Vagina (tissue), 2 donors: ENCODE measurements at regions of chr6 and their contacts with region 1.

Region 1: DNA sequence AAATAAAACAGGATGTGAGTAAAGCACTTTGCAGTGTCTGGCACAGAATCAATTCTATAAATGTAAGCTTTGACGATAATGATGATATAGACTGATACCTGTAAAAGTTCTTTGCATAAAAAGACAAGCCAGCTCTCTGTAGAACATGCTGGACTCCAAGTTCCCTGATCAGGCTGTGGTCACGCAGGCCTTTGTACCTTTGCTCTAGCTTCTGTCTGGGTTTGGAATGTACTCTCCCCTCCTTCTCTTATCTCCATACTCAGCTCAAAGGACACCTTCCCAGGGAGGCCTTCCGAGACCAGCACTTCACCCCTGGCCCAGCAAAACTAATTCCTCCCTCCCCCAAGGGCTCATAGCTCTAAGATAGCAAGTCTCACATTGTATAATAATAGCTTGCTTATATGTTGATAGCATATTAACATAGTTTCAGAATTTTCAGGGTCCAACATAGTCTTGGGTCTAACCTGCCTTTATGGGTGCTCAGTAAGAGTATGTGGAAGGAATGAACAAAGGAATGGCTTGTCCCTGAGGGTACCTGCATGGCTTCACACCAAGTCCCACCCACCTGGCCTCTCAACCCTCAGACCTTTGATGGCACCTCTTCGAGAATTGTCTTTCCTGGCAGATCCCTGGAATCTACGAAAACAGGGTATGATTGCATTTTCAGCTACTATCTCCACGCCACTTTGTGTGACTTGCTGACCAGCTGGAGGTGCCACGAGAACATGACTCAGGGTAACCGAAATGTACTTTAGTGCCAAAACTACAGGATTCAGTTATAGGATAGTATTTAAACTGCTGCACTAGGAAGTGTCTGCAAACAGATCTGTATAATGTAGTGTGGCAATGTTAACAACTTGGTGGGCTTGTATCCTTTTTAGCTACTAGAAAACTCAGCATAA is 41.7 kb upstream of the PIM1 start:
- DNase-seq: no peak
- H3K4me3 ChIP-seq: no peak overlapping the region
- H3K27ac ChIP-seq: no peak overlapping the region
- H3K4me1 ChIP-seq: peaks cover 24% of the 10 kb centered on the region
- H3K27me3 ChIP-seq: no peaks in the 10 kb centered on the region
- CTCF ChIP-seq: no peak
- POLR2A ChIP-seq: no peak

Region 2: GRCh38 chr6:36858407-36858981 is 269.7 kb before region 1 on chr6:
- intact Hi-C with region 1: no loop called
- DNase-seq: peak in 1 of 2 donors; percentile 93
- H3K4me3 ChIP-seq: peak overlapping the region; percentile 13 to 23
- H3K27ac ChIP-seq: peak overlapping the region; percentile 61
- H3K4me1 ChIP-seq: peaks cover 24% of the 10 kb centered on the region
- H3K27me3 ChIP-seq: no peaks in the 10 kb centered on the region
- CTCF ChIP-seq: no peak
- POLR2A ChIP-seq: no peak

Region 3: DNA sequence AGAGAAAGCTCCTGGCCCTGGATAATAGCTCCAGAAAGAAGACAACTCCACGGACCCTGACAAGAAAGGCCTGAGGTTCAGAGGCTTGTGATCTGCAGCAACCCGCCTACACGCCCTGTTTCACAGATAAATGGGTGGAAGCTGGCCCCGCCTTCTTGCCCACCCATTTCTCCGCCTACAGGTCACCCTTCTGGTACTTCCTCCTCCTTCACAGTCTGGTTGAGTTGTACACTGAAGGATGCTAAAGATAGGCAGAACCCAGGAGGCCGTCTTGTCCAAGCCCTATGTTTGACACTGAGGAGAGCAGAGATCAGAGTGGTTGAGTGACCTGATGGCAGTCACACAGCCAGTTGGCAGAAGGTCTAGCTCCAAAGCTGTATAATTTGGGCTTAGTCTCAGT is 603.7 kb after region 1 on chr6:
- intact Hi-C with region 1: loop called (anchors 10 kb)
- DNase-seq: no peak
- H3K4me3 ChIP-seq: no peak overlapping the region
- H3K27ac ChIP-seq: no peak overlapping the region
- H3K4me1 ChIP-seq: no peaks in the 10 kb centered on the region
- H3K27me3 ChIP-seq: no peaks in the 10 kb centered on the region
- CTCF ChIP-seq: no peak
- POLR2A ChIP-seq: no peak